Vagina (tissue), 2 donors: ENCODE measurements at regions of chr12 and their contacts with region 1.

Region 1: DNA sequence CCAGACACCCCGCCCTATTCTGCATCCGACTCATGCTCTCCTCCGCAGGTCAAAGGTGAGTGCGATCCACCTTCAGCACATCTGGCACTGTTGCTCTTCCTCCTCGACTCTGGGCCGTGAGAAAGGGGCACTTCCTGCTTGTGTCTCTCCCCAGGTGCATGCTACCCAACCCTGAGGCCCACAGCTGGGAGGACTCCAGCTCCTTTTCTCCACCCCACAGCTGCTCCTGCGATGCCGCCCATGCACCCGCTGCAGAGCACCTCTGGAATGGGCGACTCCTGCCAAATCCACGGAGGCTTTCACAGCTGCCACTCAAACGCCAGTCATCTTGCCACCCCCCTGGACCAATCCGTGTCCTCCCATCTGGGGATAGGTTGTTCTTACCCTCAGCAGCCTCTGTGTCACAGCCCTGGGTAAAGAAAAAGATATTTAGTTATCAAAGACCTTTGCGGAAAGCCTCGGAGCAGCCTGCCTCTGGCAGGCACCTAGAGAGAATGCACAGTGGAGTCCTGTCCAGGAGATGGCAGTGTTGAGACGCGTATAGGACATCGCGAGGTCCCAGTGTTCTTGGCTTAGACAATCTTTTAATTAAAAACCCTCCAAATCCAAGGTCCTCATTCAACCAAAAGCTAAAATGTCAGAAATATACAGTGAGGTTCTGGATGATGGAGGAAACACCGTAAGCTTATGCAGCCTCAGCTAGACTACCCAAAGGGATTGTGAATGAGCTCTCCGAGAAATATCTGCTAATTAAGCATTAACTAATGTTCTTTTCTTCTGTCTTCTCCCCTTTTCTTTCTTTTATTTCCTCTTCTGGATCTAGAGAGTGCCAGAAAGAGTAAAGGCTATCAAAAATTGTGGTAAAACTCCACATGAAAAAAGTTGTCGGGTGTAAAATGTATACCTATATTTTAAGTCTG is 54.3 kb downstream of the MYRFL start:
- DNase-seq: no peak
- H3K4me3 ChIP-seq: peak overlapping the region in 1 of 2 donors; percentile 17
- H3K27ac ChIP-seq: no peak overlapping the region
- H3K4me1 ChIP-seq: peaks cover 8% of the 10 kb centered on the region
- H3K27me3 ChIP-seq: no peaks in the 10 kb centered on the region
- CTCF ChIP-seq: peak; percentile 58 to 86 (median 64)
- POLR2A ChIP-seq: no peak

Region 2: DNA sequence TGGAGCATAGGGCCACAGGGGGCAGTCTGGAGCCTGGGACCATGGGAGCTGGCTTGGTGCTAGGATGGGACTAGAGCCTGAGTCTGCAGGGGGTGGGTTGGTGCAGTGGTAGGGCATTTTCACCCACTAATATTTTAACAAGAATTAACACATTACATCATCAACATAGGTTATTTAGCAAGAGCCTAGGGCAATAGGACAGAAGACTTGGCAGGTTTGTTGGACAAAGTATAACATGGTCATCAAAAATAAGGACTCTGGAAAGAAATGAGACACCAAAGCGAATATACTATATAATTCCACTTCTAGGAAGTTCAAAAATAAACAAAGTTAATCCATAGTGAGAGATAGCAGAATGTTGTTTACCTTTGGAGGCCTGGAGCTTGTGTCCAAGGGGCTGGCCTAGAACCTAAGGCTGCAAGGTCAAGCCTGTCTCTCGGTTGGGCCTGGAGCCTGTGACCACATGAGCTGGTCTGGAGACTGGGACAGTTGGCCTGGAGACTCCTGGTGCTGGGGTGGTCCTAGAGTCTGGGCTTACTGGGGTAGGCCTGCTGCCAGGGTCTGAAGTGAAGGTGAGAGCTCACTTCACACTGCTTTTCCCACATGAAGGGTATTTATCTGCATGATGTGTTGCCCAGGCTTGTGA is 335.8 kb after region 1 on chr12:
- intact Hi-C with region 1: no loop called
- DNase-seq: no peak
- H3K4me3 ChIP-seq: no peak overlapping the region
- H3K27ac ChIP-seq: no peak overlapping the region
- H3K4me1 ChIP-seq: no peaks in the 10 kb centered on the region
- H3K27me3 ChIP-seq: no peaks in the 10 kb centered on the region
- CTCF ChIP-seq: no peak
- POLR2A ChIP-seq: no peak

Region 3: GRCh38 chr12:70576346-70577282 is 697.3 kb after region 1 on chr12:
- intact Hi-C with region 1: loop called (anchors 5 kb)
- DNase-seq: no peak
- H3K4me3 ChIP-seq: no peak overlapping the region
- H3K27ac ChIP-seq: no peak overlapping the region
- H3K4me1 ChIP-seq: peaks cover 2% of the 10 kb centered on the region
- H3K27me3 ChIP-seq: no peaks in the 10 kb centered on the region
- CTCF ChIP-seq: peak; percentile 38 to 74 (median 69)
- POLR2A ChIP-seq: no peak

Region 4: GRCh38 chr12:70719672-70720420 is 840.5 kb after region 1 on chr12:
- intact Hi-C with region 1: loop called (anchors 10 kb)
- DNase-seq: no peak
- H3K4me3 ChIP-seq: peak overlapping the region in 1 of 2 donors; percentile 11
- H3K27ac ChIP-seq: no peak overlapping the region
- H3K4me1 ChIP-seq: no peaks in the 10 kb centered on the region
- H3K27me3 ChIP-seq: no peaks in the 10 kb centered on the region
- CTCF ChIP-seq: peak; percentile 49 to 75 (median 69)
- POLR2A ChIP-seq: no peak